ENCODE measurements at regions of chr5 and their contacts with region 1.

Region 1: GRCh38 chr5:3009605-3010004 is 258.1 kb upstream of the IRX2 start:
- DNase-seq: no peak
- ATAC-seq: no peak
- H3K4me3 ChIP-seq: no peak overlapping the region
- H3K27ac ChIP-seq: no peak overlapping the region
- H3K4me1 ChIP-seq: no peaks in the 10 kb centered on the region
- H3K27me3 ChIP-seq: peaks cover 0 to 3% (median 0%) of the 10 kb centered on the region in 7 donors
- CTCF ChIP-seq: no peak

Region 2: DNA sequence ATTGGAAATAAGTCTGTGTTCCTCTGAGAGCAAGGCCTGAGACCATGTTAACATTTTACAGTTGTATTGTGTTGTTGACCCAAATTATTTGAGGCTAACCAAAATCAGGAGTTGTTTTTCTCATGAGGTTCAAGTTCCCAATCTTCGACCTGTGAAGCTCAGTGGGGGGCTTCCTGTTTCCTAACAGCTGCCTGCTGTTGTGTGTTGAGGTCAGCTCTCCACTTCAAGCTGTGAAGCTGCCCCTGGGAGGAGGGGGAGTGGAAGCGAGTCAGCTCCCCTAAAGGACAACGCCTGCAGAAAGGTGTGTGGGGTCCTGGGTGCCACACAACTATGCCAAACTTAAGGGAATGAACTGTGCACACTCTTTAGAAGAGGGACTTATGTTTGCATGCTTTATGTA is 881.5 kb after region 1 on chr5:
- intact Hi-C with region 1: loop called in 1 of 10 experiments (anchors 10 kb)
- DNase-seq: no peak
- ATAC-seq: no peak
- H3K4me3 ChIP-seq: no peak overlapping the region
- H3K27ac ChIP-seq: no peak overlapping the region
- H3K4me1 ChIP-seq: no peaks in the 10 kb centered on the region
- H3K27me3 ChIP-seq: no peaks in the 10 kb centered on the region
- CTCF ChIP-seq: no peak

Measured in heart right ventricle (tissue), 16 donors.